Activated T-helper 1 cell treated with anti-CD3 and anti-CD28 coated beads, Interleukin-12 subunit alpha, Interleukin-12 subunit beta, Interleukin-2, Interleukin-4 antibody, amounts not matched to agents 30 ng/mL and 10 ng/mL and 1 ng/mL, durations not matched to agents 14 hours and 24 hours and 36 hours (primary cell): ENCODE measurements at regions of chr13 and their contacts with region 1.

Region 1: DNA sequence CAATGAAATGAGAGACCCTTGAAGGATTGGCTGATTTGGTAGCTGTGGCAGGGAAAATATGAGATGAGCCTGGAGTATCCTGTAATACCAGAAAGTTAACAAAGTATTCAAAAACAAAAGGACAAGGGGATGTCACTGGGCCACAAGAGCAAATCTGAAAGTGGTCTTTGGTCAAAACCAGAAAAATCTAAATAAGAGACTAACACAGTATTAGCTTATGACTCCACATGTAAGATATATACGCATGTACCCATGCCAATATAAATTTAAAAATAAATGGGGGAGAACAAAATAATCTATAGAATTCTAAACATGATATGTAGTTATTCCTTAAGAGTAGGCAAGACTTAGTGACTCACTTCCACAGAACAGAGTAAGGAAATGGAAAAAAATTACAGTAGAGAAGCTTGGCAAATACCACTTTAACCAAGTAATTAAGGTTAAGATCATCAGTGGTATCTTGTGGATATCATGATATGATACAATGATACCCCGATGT is 16.9 kb downstream of the KLF12 start:
- DNase-seq: no peak
- H3K4me3 Mint-ChIP-seq: no peak overlapping the region
- H3K27ac Mint-ChIP-seq: no peak overlapping the region
- H3K4me1 Mint-ChIP-seq: peaks cover 42% of the 10 kb centered on the region
- H3K27me3 Mint-ChIP-seq: no peaks in the 10 kb centered on the region

Region 2: GRCh38 chr13:74128156-74128767 is 11.0 kb after region 1 on chr13:
- intact Hi-C with region 1: loop called (anchors 1 kb)
- DNase-seq: no peak
- H3K4me3 Mint-ChIP-seq: no peak overlapping the region
- H3K27ac Mint-ChIP-seq: peak overlapping the region; percentile 71
- H3K4me1 Mint-ChIP-seq: peaks cover 62% of the 10 kb centered on the region
- H3K27me3 Mint-ChIP-seq: no peaks in the 10 kb centered on the region